ENCODE measurements at regions of chr16 and their contacts with region 1.

Region 1: DNA sequence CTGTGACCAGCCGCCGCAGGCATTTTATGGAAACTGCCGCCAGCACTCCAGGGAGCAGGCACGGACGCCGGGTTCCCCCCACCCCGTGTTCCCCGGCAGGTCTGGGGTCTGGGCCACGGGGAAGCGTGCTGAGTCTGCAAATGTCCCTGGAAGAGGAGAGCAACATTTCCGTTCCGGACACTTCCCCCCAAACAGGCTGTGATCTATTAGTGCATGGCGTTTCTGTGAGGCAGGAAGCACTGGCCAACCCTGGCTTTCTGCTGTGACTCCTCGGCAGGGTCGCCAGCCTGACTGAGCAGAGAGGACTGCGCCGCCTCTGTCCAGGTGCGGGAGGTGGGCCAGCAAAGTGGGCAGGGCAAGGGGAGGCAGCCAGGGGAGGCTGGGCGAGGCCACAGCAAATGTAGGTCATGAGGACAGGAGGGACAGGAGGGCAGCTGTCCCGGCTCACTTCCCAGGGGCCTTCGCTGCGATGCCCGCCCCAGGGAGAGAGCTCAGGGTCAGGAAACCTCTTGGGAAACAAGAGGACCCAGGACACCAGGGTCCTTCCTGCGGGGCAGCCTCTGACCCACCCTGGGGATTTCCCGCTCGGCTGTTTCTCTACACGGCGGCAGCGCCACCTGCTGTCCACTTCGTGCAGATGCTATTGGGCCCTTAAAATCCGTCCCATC is 9.5 kb downstream of the FOXF1 start:
- DNase-seq: no peak

Region 2: GRCh38 chr16:85821441-85822135 is 698.2 kb before region 1 on chr16:
- intact Hi-C with region 1: loop called (anchors 2 kb)
- DNase-seq: peak; percentile 85

Region 3: GRCh38 chr16:86072328-86073102 is 447.3 kb before region 1 on chr16:
- intact Hi-C with region 1: loop called (anchors 2 kb)
- DNase-seq: no peak

Region 4: DNA sequence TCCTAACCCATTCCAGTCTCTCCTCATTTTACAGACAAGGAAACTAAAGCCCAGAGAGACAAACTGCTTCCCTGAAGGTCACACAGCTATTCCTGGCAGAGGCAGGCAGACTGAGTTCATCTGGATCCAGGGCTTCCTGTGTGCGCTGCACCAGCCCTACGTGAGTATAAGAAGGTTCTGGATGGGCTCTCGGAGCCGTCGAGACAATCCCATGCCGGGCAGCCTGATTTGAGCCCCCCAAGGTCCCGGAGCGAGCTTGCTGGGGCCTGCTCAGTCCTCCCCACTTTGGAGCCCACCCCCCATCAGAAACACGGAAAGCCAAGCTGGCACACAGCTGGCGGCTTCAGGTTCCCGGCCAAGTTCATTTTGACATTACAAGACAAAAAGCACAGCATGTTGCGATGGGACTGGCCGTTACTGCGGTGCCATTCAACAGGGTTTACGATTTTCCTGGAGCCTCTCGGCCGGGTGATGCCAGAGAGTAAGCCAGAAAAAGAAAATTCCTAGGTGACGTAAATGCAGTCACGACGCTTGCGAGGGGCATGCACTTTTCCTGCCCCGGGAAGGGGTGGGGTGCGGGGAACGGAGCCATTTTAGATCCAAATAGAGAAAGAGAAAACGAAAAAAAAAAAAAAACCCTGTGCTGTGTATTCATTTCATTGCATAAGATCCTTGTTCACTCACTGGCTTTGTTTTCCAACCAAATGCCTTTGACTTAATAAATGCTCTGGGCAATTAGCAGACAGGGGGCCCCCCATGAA is 176.6 kb before region 1 on chr16:
- intact Hi-C with region 1: loop called (anchors 2 kb)
- DNase-seq: no peak

Region 5: DNA sequence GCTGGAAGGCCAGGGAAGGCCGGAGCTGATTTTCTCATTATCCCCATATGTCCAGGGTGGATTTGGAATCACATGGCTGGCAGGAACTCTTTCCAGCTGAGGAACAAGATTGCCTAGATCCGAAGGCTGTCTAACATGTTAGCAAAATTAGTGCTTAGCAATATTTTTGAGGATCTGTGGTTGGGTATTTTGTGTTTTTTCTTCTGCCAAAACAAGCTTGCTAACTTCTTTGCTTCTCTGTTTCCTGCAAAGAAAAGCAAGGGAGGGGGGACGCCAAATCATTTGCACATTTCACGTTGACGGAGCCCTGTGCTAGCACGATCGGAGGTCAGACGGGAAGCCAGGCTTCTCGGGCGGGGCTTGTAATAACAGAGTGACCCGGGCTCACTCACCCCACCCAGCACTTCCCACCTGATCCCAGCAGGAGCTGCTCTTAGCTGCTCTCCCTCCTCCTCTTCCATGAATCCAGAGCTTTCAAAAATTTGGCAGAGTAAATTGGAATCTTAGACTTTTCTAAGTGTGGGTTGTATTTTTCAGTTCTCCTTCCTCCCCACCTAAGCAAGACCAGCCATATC is 42.7 kb before region 1 on chr16:
- intact Hi-C with region 1: no loop called
- DNase-seq: no peak

Region 6: GRCh38 chr16:86631441-86631840 is 111.7 kb after region 1 on chr16:
- intact Hi-C with region 1: no loop called
- DNase-seq: no peak